ENCODE measurements at regions of chr9 and their contacts with region 1.

Region 1: DNA sequence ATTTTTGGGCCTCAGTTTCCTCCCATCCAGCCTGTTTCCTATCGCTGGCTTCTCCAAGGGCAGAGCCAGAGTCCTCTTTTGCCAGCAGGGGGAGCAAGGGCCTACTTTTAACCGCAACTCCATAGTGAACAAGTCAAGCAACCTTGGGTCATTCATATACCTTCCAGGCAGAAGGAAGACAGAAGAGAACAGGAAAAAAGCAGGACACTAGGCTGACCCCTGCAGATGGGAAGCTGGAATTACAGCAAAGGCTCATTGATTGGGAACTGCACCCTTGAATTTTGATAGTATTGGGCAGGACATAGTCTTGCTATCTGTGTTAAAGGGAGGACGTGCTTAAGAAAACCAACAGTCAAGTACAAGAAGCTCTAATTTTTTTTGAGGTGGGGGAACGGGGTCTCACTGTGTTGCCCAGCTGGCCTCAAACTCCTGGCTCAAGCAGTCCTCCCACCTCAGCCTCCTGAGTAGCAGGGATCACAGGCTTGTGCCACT is 30.1 kb downstream of the QRFP start:
- DNase-seq: peak; percentile 65
- ATAC-seq: peak; percentile 61
- H3K4me3 Mint-ChIP-seq: no peak overlapping the region
- H3K27ac Mint-ChIP-seq: no peak overlapping the region
- H3K4me1 Mint-ChIP-seq: no peaks in the 10 kb centered on the region
- H3K27me3 Mint-ChIP-seq: no peaks in the 10 kb centered on the region

Region 2: DNA sequence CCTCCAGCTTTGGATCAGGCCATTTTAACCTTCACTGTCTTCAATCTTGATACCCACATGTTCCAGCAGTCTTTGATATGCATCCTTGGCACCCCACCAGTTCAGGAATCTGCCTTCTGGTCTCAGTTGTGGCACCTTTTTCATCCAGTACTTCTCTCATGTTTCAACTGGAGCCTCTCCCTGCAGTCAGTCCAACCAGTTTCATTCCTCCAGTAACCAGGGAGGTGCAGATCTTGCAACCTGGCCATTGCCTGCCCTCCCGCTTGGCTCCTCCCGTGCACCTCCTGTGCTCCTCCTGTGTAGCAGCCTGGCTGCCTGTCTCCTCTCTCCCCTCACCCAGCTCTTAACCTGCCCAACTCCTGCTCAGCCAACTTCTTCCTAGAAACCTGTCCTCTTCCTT is 266.9 kb before region 1 on chr9:
- CTCF ChIA-PET with region 1: no interaction called
- POLR2A ChIA-PET with region 1: no interaction called
- DNase-seq: no peak
- ATAC-seq: no peak
- H3K4me3 Mint-ChIP-seq: no peak overlapping the region
- H3K27ac Mint-ChIP-seq: no peak overlapping the region
- H3K4me1 Mint-ChIP-seq: no peaks in the 10 kb centered on the region
- H3K27me3 Mint-ChIP-seq: no peaks in the 10 kb centered on the region

Region 3: DNA sequence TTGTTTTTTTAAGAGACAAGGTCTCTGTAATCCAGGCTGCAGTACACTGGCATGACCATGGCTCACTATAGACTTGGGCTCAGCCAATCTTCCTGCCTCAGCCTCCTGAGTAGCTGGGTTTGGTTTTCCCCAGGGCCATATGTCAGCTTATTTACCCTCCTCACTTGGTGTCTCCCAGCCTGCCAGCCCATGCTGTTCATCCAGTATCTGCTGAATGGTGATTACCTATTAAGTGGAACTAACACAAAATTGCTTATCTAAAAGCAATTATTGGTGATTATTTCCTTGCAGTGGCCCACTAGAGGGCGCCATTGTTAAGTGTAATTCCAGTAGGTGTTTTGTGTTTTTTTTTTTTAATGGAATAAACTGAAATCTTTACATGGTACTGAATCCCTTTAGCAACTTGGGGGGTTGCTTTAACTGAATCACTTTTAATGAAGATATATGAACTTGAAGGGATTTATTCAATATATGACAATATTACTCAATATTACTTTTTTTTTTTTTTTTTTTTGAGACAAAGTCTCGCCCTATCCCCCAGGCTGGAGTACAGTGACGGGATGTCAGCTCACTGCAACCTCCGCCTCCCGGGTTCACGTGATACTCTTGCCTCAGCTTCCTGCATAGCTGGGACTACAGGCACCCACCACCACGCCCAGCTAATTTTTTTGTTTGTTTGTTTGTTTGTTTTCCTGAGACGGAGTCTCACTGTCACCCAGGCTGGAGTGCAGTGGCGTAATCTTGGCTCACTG is 159.1 kb before region 1 on chr9:
- CTCF ChIA-PET with region 1: interaction called, 17 read pairs
- POLR2A ChIA-PET with region 1: no interaction called
- DNase-seq: peak; percentile 80
- ATAC-seq: peak; percentile 57
- H3K4me3 Mint-ChIP-seq: no peak overlapping the region
- H3K27ac Mint-ChIP-seq: no peak overlapping the region
- H3K4me1 Mint-ChIP-seq: peaks cover 5% of the 10 kb centered on the region
- H3K27me3 Mint-ChIP-seq: no peaks in the 10 kb centered on the region

Region 4: GRCh38 chr9:130770679-130771442 is 95.7 kb before region 1 on chr9:
- CTCF ChIA-PET with region 1: interaction called, 59 read pairs
- POLR2A ChIA-PET with region 1: no interaction called
- DNase-seq: no peak
- ATAC-seq: peak; percentile 82
- H3K4me3 Mint-ChIP-seq: no peak overlapping the region
- H3K27ac Mint-ChIP-seq: no peak overlapping the region
- H3K4me1 Mint-ChIP-seq: peaks cover 23% of the 10 kb centered on the region
- H3K27me3 Mint-ChIP-seq: no peaks in the 10 kb centered on the region

Region 5: GRCh38 chr9:130997925-130998596 is 131.5 kb after region 1 on chr9:
- CTCF ChIA-PET with region 1: interaction called, 16 read pairs
- POLR2A ChIA-PET with region 1: no interaction called
- DNase-seq: peak; percentile 66
- ATAC-seq: peak; percentile 68
- H3K4me3 Mint-ChIP-seq: no peak overlapping the region
- H3K27ac Mint-ChIP-seq: no peak overlapping the region
- H3K4me1 Mint-ChIP-seq: no peaks in the 10 kb centered on the region
- H3K27me3 Mint-ChIP-seq: peaks cover 3% of the 10 kb centered on the region

Region 6: GRCh38 chr9:131046581-131047202 is 180.2 kb after region 1 on chr9:
- CTCF ChIA-PET with region 1: interaction called, 41 read pairs
- POLR2A ChIA-PET with region 1: no interaction called
- DNase-seq: peak; percentile 77
- ATAC-seq: peak; percentile 96
- H3K4me3 Mint-ChIP-seq: no peak overlapping the region
- H3K27ac Mint-ChIP-seq: no peak overlapping the region
- H3K4me1 Mint-ChIP-seq: peaks cover 4% of the 10 kb centered on the region
- H3K27me3 Mint-ChIP-seq: no peaks in the 10 kb centered on the region